Heart left ventricle (tissue), 16 donors: ENCODE measurements at regions of chr15 and their contacts with region 1.

Region 1: DNA sequence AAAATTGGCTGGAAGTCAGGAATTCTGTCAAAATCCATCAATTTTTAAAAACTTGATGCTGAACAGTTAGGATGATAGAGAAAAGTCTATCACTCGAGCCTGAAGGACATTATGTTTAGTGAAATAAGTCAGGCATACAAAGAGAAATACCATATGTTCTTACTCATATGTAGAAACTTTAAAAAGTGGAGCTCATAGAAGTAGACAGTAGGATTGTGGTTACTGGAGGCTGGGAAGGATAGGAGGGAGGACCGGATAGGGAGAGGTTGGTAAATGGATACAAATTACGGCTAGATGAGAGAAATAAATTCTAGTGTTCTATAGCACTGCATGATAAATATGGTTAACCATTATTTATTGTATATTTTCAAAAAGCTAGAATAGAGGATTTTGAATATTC is 389.5 kb upstream of the RASGRP1 start:
- DNase-seq: no peak
- ATAC-seq: no peak
- H3K4me3 ChIP-seq: no peak overlapping the region
- H3K27ac ChIP-seq: no peak overlapping the region
- H3K4me1 ChIP-seq: no peaks in the 10 kb centered on the region
- H3K27me3 ChIP-seq: no peaks in the 10 kb centered on the region
- CTCF ChIP-seq: no peak
- POLR2A ChIP-seq: no peak

Region 2: DNA sequence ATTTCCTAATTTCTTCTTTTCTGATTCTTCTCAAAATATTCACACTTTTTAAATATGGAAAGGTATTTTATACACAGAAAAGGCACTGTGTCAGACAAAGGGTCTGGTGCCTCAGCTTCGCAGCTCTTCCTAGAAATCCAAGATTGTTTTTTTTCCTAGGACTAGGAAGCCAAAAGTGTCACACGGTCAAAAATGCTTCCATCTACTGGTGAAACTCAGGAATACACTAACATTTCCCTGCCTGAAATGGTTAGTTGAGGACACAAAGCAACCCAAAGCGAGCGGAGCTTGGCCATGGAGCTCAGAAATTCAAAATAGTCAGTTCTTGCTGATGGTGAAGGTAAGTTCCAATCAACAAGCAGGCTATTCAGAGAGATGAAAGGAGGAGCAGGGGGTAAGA is 37.0 kb after region 1 on chr15:
- intact Hi-C with region 1: loop called in 1 of 10 experiments (anchors 2 kb)
- DNase-seq: no peak
- ATAC-seq: peak in 1 of 4 donors; percentile 35
- H3K4me3 ChIP-seq: no peak overlapping the region
- H3K27ac ChIP-seq: peak overlapping the region in 6 of 12 donors; percentile 8 to 62 (median 25)
- H3K4me1 ChIP-seq: peaks cover 0 to 31% (median 12%) of the 10 kb centered on the region in 12 donors
- H3K27me3 ChIP-seq: no peaks in the 10 kb centered on the region
- CTCF ChIP-seq: peak in 11 of 12 donors; percentile 20 to 61 (median 46)
- POLR2A ChIP-seq: no peak